Calu3 (cell line): ENCODE measurements at regions of chr11 and their contacts with region 1.

Region 1: GRCh38 chr11:73965076-73965860 is 14.4 kb downstream of the DNAJB13 start:
- DNase-seq: no peak
- H3K4me3 Mint-ChIP-seq: no peak overlapping the region
- H3K27ac Mint-ChIP-seq: no peak overlapping the region
- H3K4me1 Mint-ChIP-seq: peaks cover 9% of the 10 kb centered on the region
- H3K27me3 Mint-ChIP-seq: no peaks in the 10 kb centered on the region
- CTCF ChIP-seq: no peak

Region 2: DNA sequence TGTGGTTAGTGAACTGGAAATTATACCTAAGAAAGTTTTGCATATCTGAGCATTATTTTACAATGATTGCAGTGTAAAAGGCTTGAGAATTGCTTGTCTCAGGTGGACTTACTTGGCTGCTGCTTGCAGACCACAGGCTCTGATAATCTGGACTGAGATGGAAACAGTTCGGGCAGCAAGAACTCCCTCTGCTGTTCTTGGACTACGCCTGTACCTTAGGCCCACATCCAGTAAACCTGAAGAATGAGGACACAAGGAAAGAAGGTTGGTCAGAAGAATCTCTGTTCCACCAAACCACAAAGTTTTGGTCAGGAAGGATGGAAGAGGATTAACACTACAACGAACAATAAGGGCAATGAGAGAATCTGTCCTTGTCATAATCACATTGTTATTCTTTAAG is 125.4 kb after region 1 on chr11:
- CTCF ChIA-PET with region 1: no interaction called
- intact Hi-C with region 1: loop called (anchors 2 kb)
- DNase-seq: peak; percentile 14
- H3K4me3 Mint-ChIP-seq: no peak overlapping the region
- H3K27ac Mint-ChIP-seq: no peak overlapping the region
- H3K4me1 Mint-ChIP-seq: no peaks in the 10 kb centered on the region
- H3K27me3 Mint-ChIP-seq: no peaks in the 10 kb centered on the region
- CTCF ChIP-seq: no peak

Region 3: GRCh38 chr11:74170694-74171629 is 205.7 kb after region 1 on chr11 and contains the starts of genes C2CD3 and PPME1:
- CTCF ChIA-PET with region 1: no interaction called
- intact Hi-C with region 1: loop called (anchors 10 kb)
- DNase-seq: peak; percentile 97
- H3K4me3 Mint-ChIP-seq: no peak within 1 kb of the TSS
- H3K27ac Mint-ChIP-seq: no peak within 1 kb of the TSS
- H3K4me1 Mint-ChIP-seq: no peaks in the 10 kb centered on the region
- H3K27me3 Mint-ChIP-seq: no peaks in the 10 kb centered on the region
- CTCF ChIP-seq: no peak
- total RNA-seq, gene C2CD3: 22.2 and 26.9 TPM in 2 replicates
- total RNA-seq, gene PPME1: 48.0 and 55.0 TPM in 2 replicates